Mucosa of descending colon (tissue), 3 donors: ENCODE measurements at regions of chr3 and their contacts with region 1.

Region 1: GRCh38 chr3:15629860-15630597 is 28.5 kb downstream of the BTD start:
- DNase-seq: peak in 1 of 3 donors; percentile 76
- ATAC-seq: peak; percentile 98
- H3K4me3 ChIP-seq: no peak overlapping the region
- H3K4me1 ChIP-seq: peaks cover 2% of the 10 kb centered on the region
- CTCF ChIP-seq: peak; percentile 32

Region 2: DNA sequence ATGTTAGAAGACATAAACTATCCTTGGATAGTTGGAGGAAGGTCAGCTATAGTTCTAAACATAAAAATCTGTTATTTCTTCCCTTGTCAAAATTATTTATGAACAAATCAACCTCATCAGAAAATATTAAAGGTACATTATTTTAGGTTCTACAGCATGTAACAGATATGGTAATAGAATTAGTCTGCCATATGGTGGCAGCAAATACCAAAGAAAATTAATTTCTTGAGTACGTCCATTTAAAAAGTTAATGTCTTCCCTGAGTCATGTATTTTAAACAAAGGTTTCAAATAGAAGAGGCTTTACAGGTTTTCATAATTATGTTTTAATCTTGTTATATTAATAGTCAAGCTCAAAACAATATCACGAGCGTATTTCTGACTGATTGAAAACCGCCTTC is 185.7 kb after region 1 on chr3:
- intact Hi-C with region 1: loop called (anchors 5 to 10 kb)
- DNase-seq: no peak
- ATAC-seq: no peak
- H3K4me3 ChIP-seq: no peak overlapping the region
- H3K4me1 ChIP-seq: peaks cover 9% of the 10 kb centered on the region
- CTCF ChIP-seq: no peak

Region 3: DNA sequence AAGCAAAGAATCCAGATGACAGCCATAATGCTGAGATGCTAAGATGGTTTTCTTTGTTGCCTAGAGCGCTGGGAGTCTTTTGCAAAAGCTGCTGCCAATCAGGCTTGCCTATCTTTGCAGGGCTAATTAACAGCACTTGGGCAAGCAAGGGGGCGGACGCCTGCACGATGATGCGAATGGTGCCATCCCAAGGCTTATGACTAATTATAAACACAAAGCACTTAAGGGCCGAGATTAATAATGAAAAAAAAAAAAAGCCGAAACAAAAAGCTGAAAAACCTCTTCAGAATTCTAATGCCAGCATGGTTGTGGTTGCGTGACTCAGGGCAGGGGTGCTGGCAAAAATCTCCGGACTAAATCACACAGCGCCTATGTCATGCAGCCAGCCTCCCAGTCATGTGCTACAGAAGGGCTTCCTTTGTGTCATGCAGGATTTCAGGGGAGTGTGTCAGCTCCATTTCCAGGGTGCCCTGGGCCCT is 352.7 kb after region 1 on chr3:
- intact Hi-C with region 1: no loop called
- DNase-seq: no peak
- ATAC-seq: no peak
- H3K4me3 ChIP-seq: no peak overlapping the region
- H3K4me1 ChIP-seq: no peaks in the 10 kb centered on the region
- CTCF ChIP-seq: no peak